ENCODE measurements at regions of chr4 and their contacts with region 1.

Region 1: GRCh38 chr4:88225232-88226105 is 58.9 kb downstream of the PPM1K start:
- DNase-seq: no peak
- H3K4me3 ChIP-seq: no peak overlapping the region
- H3K27ac ChIP-seq: no peak overlapping the region
- H3K4me1 ChIP-seq: no peaks in the 10 kb centered on the region
- H3K27me3 ChIP-seq: no peaks in the 10 kb centered on the region
- CTCF ChIP-seq: no peak
- POLR2A ChIP-seq: no peak

Region 2: GRCh38 chr4:88244816-88245579 is 19.5 kb after region 1 on chr4:
- intact Hi-C with region 1: no loop called
- DNase-seq: no peak
- H3K4me3 ChIP-seq: no peak overlapping the region
- H3K27ac ChIP-seq: no peak overlapping the region
- H3K4me1 ChIP-seq: no peaks in the 10 kb centered on the region
- H3K27me3 ChIP-seq: no peaks in the 10 kb centered on the region
- CTCF ChIP-seq: no peak
- POLR2A ChIP-seq: no peak

Region 3: GRCh38 chr4:88275516-88275915 is 50.0 kb after region 1 on chr4:
- intact Hi-C with region 1: no loop called
- DNase-seq: no peak
- H3K4me3 ChIP-seq: no peak overlapping the region
- H3K27ac ChIP-seq: no peak overlapping the region
- H3K4me1 ChIP-seq: no peaks in the 10 kb centered on the region
- H3K27me3 ChIP-seq: no peaks in the 10 kb centered on the region
- CTCF ChIP-seq: no peak
- POLR2A ChIP-seq: no peak

Region 4: DNA sequence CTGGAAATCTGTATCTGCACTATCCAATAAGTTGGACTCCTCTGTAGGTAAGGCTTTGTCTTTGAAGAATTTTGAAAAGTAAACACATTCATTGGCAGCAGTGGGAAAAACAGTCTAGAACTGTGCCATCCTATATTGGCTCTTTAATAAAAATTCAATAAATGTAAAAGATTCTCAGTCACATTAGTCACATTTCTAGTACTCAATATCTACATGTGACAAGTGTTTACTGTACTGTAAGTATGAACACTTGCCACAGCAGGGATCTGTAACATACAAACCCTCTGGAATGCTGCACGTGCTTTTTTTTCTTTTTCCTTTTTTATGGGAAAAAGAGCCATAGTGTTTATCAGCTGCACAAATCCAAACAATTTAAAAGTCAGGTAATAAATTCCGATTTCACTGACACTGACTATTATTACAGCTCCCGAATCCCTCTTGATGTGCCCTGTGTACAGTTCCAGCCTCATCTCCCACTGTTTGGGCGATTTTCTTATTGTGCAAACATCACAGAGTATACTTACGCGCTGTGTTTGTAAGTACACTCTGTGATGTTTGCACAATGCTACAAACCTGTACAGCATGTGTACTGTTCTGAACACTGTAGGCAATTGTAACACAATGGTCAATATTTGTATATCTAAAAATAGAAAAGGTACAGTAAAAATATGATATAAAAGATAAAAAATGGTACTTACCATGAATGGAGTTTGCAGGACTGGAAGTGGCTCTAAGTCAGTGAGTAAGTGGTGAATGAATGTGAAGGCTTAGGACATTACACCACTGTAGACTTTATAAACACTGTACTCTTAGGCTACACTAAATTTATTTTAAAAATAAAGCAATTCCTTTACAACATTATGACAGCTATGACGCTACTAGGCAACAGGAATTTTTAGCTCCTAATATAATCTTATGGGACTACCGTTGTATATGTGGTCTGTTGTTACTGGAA is 289.4 kb after region 1 on chr4:
- intact Hi-C with region 1: loop called (anchors 10 kb)
- DNase-seq: no peak
- H3K4me3 ChIP-seq: no peak overlapping the region
- H3K27ac ChIP-seq: no peak overlapping the region
- H3K4me1 ChIP-seq: no peaks in the 10 kb centered on the region
- H3K27me3 ChIP-seq: no peaks in the 10 kb centered on the region
- CTCF ChIP-seq: no peak
- POLR2A ChIP-seq: no peak